IMR-90 (cell line): ENCODE measurements at regions of chr10 and their contacts with region 1.

Region 1: GRCh38 chr10:31318854-31319601 is at the start of gene ZEB1:
- DNase-seq: peak; percentile 93
- ATAC-seq: peak; percentile 55
- H3K4me3 ChIP-seq: peak within 1 kb of the TSS; percentile 65
- H3K27ac ChIP-seq: peak within 1 kb of the TSS; percentile 97
- H3K4me1 ChIP-seq: peaks cover 7% of the 10 kb centered on the region
- H3K27me3 ChIP-seq: no peaks in the 10 kb centered on the region
- CTCF ChIP-seq: peak; percentile 55
- POLR2A ChIP-seq: peak; percentile 65
- RAD21 ChIP-seq: peak; percentile 53
- total RNA-seq, gene ZEB1: 108 and 139 TPM in 2 replicates

Region 2: DNA sequence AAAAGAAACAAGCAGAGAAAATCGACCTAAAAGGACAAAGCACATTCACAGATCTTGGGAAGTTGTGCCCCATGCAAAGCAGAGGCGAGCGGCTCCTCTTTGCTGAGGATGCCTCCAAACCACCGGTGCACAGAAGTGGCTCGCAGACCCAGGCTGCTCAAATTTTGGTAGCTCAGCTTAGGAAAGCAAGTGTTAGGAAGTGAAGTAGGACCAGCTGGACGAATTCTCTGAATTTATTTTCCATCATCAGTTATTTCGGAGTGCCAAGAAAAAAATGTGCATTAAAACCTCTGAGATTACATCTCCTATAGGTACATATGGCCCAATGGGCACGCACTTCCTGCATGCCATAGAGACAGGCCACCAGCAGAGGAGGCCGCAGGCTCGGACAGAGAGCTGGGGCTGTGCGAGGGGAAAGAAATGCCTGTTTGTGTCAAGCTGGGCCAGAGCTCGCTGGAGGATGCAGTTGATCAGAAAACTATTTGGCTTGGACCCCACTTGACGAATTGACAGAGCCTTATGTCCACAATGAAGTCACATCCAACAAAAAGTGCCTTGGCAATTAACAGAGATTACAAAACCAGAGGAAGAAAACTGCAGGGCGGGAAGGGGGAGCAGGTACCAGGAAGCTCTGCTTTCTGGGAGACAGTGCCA is 567.2 kb before region 1 on chr10:
- CTCF ChIA-PET with region 1: interaction called, 3 read pairs
- POLR2A ChIA-PET with region 1: no interaction called
- dilution Hi-C with region 1: no loop called
- in situ Hi-C with region 1: no loop called
- intact Hi-C with region 1: loop called (anchors 1 kb)
- DNase-seq: peak; percentile 75
- ATAC-seq: peak; percentile 92
- H3K4me3 ChIP-seq: no peak overlapping the region
- H3K27ac ChIP-seq: peak overlapping the region; percentile 2; the same call in 1 of the 2 replicates
- H3K4me1 ChIP-seq: peaks cover 16% of the 10 kb centered on the region
- H3K27me3 ChIP-seq: no peaks in the 10 kb centered on the region
- CTCF ChIP-seq: peak; percentile 98
- POLR2A ChIP-seq: peak; percentile 55
- RAD21 ChIP-seq: peak; percentile 100

Region 3: GRCh38 chr10:30783939-30784500 is 535.0 kb before region 1 on chr10:
- CTCF ChIA-PET with region 1: no interaction called
- POLR2A ChIA-PET with region 1: interaction called, 4 read pairs
- dilution Hi-C with region 1: no loop called
- in situ Hi-C with region 1: loop called (anchors 10 kb)
- intact Hi-C with region 1: loop called (anchors 1 kb)
- DNase-seq: peak; percentile 89
- ATAC-seq: peak; percentile 83
- H3K4me3 ChIP-seq: 0 out of 2 replicates have a peak overlapping the region, but pooled peaks have one; percentile 1
- H3K27ac ChIP-seq: peak overlapping the region; percentile 94
- H3K4me1 ChIP-seq: peaks cover 22% of the 10 kb centered on the region
- H3K27me3 ChIP-seq: no peaks in the 10 kb centered on the region
- CTCF ChIP-seq: peak; percentile 95
- POLR2A ChIP-seq: peak; percentile 55; the same call in 1 of the 2 replicates
- RAD21 ChIP-seq: peak; percentile 96

Region 4: GRCh38 chr10:31133628-31134302 is 185.3 kb before region 1 on chr10:
- CTCF ChIA-PET with region 1: no interaction called
- POLR2A ChIA-PET with region 1: interaction called, 3 read pairs
- dilution Hi-C with region 1: no loop called
- in situ Hi-C with region 1: no loop called
- intact Hi-C with region 1: loop called (anchors 5 kb)
- DNase-seq: peak; percentile 65
- ATAC-seq: peak; percentile 48
- H3K4me3 ChIP-seq: no peak overlapping the region
- H3K27ac ChIP-seq: peak overlapping the region; percentile 100
- H3K4me1 ChIP-seq: peaks cover 24% of the 10 kb centered on the region
- H3K27me3 ChIP-seq: no peaks in the 10 kb centered on the region
- CTCF ChIP-seq: no peak
- POLR2A ChIP-seq: 0 out of 2 replicates have a peak, but pooled peaks have one; percentile 10
- RAD21 ChIP-seq: no peak

Region 5: GRCh38 chr10:31479752-31480151 is 160.7 kb after region 1 on chr10:
- CTCF ChIA-PET with region 1: no interaction called
- POLR2A ChIA-PET with region 1: no interaction called
- dilution Hi-C with region 1: no loop called
- in situ Hi-C with region 1: loop called (anchors 10 kb)
- intact Hi-C with region 1: no loop called
- DNase-seq: peak; percentile 6
- ATAC-seq: no peak
- H3K4me3 ChIP-seq: no peak overlapping the region
- H3K27ac ChIP-seq: no peak overlapping the region
- H3K4me1 ChIP-seq: peaks cover 2% of the 10 kb centered on the region; the same call in 1 of the 2 replicates
- H3K27me3 ChIP-seq: no peaks in the 10 kb centered on the region
- CTCF ChIP-seq: no peak
- POLR2A ChIP-seq: no peak
- RAD21 ChIP-seq: no peak

Region 6: DNA sequence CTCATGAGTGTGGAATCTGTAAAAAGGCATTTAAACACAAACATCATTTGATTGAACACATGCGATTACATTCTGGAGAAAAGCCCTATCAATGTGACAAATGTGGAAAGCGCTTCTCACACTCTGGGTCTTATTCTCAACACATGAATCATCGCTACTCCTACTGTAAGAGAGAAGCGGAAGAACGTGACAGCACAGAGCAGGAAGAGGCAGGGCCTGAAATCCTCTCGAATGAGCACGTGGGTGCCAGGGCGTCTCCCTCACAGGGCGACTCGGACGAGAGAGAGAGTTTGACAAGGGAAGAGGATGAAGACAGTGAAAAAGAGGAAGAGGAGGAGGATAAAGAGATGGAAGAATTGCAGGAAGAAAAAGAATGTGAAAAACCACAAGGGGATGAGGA is 207.7 kb after region 1 on chr10:
- CTCF ChIA-PET with region 1: no interaction called
- POLR2A ChIA-PET with region 1: no interaction called
- dilution Hi-C with region 1: no loop called
- in situ Hi-C with region 1: no loop called
- intact Hi-C with region 1: no loop called
- DNase-seq: peak; percentile 27
- ATAC-seq: no peak
- H3K4me3 ChIP-seq: no peak overlapping the region
- H3K27ac ChIP-seq: no peak overlapping the region
- H3K4me1 ChIP-seq: no peaks in the 10 kb centered on the region; the same call in 1 of the 2 replicates
- H3K27me3 ChIP-seq: no peaks in the 10 kb centered on the region
- CTCF ChIP-seq: no peak
- POLR2A ChIP-seq: no peak
- RAD21 ChIP-seq: no peak

Region 7: DNA sequence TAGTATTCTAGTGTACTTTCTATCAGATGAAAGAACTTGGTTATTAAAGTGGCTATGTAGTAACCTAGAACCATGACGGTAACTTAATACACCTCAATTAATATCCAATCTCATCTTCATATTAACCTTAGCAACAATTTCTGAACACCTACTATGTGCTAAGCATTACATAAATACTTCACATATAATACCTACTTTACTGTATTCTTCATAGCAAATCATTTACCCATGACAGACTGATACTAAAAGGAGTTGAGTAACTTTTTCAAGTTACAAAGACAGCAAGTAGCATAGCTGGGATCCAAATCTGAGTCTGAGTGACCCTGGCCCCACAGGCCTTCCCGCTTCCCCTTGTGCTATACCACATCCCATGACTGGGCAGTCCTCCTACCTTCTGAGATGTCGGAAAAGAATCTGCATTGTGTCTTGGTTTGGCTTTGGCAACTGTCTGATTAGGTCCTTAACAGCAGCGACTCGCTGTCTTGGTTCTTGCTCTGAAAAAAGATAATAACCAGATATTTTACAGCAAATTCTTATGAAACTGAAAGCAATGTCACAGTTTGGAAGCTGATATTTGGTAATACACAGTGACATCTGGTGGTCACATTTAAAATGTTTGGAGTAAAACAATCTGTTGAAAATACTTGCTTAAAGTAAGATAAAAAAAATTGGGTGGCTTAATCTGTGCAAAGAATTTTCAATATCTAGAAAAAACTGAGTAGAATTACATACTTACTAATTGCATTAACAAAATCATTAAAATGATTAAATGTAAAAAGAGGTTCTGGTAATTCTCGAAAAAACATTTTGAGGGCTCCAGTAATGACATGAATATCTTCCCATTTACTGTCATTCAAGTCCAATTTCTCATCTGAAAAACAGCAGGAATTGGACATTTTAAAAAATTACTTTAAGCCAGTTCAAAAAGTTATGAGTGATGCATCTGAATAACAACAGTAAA is 489.5 kb after region 1 on chr10:
- CTCF ChIA-PET with region 1: no interaction called
- POLR2A ChIA-PET with region 1: no interaction called
- dilution Hi-C with region 1: no loop called
- in situ Hi-C with region 1: no loop called
- intact Hi-C with region 1: loop called (anchors 1 kb)
- DNase-seq: peak; percentile 80
- ATAC-seq: peak; percentile 74
- H3K4me3 ChIP-seq: peak overlapping the region; percentile 45
- H3K27ac ChIP-seq: peak overlapping the region; percentile 94
- H3K4me1 ChIP-seq: peaks cover 2% of the 10 kb centered on the region
- H3K27me3 ChIP-seq: no peaks in the 10 kb centered on the region
- CTCF ChIP-seq: peak; percentile 66
- POLR2A ChIP-seq: no peak
- RAD21 ChIP-seq: peak; percentile 85